Motor neuron (in vitro differentiated cells): ENCODE measurements at regions of chr16 and their contacts with region 1.

Region 1: DNA sequence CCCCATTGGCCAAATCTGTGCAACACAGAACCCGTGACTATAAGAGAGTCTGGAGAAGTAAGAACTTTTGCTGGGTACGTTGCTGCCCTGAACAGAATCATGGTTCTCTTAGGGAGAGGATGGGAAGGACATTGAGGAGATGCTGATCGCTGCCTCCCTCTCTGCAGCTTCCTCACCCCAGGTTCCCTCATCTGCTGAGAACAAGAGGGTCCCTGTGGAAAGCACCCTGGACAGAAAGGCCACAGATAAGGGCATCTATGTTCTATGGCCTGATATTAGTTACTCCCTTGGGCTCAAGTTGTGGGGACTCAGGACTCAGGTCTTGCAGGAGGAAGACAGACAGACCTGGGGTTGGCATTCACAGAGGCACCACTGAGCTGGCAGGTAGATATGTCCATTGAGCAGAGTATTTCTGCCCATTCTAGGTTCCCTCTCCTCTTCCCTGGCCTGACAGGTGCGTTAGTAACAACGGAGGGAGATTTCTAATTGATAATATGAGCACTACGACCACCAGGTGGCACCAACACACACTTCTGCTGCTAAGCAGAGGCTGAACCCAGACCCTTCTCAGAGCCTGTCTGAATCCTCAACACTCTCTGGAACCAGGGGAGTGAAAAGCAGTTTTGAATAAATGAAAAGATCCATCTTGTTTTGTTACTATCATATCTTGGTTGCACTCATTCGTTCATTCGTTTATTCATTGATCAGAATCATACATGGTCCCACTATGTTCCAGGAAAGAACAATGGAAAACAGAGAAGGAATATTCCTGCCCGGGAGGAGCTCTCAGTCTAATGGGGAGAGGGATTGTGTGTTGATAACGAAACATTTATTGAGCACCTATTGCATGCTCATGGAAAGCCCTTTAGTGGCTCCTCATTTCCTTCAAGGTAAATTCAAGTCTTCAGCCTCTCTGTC is 56.4 kb downstream of the SLC6A2 start:
- ATAC-seq: peak; percentile 74 to 87 (median 82)
- H3K4me3 ChIP-seq: no peak overlapping the region
- H3K27ac ChIP-seq: no peak overlapping the region
- H3K4me1 ChIP-seq: no peaks in the 10 kb centered on the region

Region 2: DNA sequence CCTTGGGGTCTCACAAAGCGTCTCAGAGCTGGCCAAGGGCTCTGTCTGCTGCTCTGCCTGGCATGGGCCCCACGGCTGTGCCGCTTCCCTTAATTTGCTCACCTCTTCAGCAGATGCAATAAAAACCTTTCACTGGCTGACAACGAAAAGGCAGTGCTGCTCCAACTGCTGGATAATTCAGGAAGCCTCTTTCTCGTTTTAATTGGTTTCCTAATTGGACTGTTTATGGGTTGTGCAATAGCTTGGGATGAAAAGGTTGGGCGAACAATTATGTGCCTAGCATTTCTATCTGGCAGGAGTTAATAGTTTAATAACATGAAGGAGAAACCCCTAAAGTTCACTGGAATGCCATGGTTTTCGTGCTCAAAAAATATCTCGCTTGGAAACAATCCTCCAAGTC is 1015.7 kb before region 1 on chr16:
- in situ Hi-C with region 1: no loop called
- ATAC-seq: no peak
- H3K4me3 ChIP-seq: no peak overlapping the region
- H3K27ac ChIP-seq: no peak overlapping the region
- H3K4me1 ChIP-seq: peaks cover 7 to 8% of the 10 kb centered on the region in 2 donors

Region 3: GRCh38 chr16:55842369-55843104 is 130.3 kb after region 1 on chr16:
- in situ Hi-C with region 1: loop called in 7 of 9 experiments (anchors 5 to 25 kb)
- ATAC-seq: peak; percentile 46 to 70 (median 60)
- H3K4me3 ChIP-seq: no peak overlapping the region
- H3K27ac ChIP-seq: no peak overlapping the region
- H3K4me1 ChIP-seq: no peaks in the 10 kb centered on the region

Region 4: GRCh38 chr16:56317998-56318826 is 606.0 kb after region 1 on chr16:
- in situ Hi-C with region 1: loop called in 2 of 9 experiments (anchors 25 kb)
- ATAC-seq: peak; percentile 99 to 100 (median 99)
- H3K4me3 ChIP-seq: no peak overlapping the region
- H3K27ac ChIP-seq: no peak overlapping the region
- H3K4me1 ChIP-seq: peaks cover 2 to 13% of the 10 kb centered on the region in 2 donors

Region 5: DNA sequence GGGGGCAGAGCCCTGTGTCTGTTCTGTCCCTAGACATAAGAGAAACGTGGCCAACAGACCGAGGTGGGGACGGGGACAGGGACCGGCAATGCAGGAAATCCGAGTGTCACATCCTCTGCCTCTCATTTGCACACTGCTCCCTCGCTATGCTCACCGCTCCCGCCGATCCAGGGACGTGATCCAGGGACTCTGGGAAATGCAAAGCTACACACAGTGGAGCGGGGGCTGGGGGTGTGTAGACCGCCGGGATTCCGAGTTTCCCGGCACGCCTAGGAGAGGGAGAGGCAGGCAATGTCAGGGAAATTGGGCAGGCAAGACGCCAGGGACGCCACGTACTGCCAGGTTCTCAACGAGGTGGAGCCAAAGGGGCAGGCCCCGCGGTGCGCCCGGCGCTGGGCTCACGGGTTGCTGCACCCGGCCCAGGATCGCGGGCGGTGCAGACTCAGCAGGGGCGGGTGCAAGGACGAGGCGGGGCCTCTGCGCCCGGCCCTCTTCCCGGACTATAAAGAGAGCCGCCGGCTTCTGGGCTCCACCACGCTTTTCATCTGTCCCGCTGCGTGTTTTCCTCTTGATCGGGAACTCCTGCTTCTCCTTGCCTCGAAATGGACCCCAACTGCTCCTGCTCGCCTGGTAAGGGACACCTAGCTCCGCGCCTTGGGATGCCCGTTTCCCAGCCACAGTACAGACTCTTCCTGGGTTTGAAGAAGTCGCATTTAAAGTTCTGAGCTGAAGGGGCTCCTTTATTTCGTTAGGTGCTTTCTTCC is 969.9 kb after region 1 on chr16 and contains the start of gene MT1X:
- in situ Hi-C with region 1: loop called in 2 of 9 experiments (anchors 25 kb)
- ATAC-seq: peak; percentile 96 to 99 (median 98)
- H3K4me3 ChIP-seq: peak within 1 kb of the TSS; percentile 28 to 44 (median 38)
- H3K27ac ChIP-seq: peak within 1 kb of the TSS; percentile 75 to 81
- H3K4me1 ChIP-seq: peaks cover 7 to 20% of the 10 kb centered on the region in 2 donors
- total RNA-seq, gene MT1X: 21.9 to 1,765 (median 42.9) TPM